AG04450 (cell line): ENCODE measurements at regions of chr9 and their contacts with region 1.

Region 1: GRCh38 chr9:110950041-110950645 is 88.1 kb downstream of the LPAR1 start:
- DNase-seq: no peak
- H3K4me3 ChIP-seq: no peak overlapping the region
- H3K27ac ChIP-seq: peak overlapping the region; percentile 71
- H3K27me3 ChIP-seq: no peaks in the 10 kb centered on the region
- CTCF ChIP-seq: no peak

Region 2: DNA sequence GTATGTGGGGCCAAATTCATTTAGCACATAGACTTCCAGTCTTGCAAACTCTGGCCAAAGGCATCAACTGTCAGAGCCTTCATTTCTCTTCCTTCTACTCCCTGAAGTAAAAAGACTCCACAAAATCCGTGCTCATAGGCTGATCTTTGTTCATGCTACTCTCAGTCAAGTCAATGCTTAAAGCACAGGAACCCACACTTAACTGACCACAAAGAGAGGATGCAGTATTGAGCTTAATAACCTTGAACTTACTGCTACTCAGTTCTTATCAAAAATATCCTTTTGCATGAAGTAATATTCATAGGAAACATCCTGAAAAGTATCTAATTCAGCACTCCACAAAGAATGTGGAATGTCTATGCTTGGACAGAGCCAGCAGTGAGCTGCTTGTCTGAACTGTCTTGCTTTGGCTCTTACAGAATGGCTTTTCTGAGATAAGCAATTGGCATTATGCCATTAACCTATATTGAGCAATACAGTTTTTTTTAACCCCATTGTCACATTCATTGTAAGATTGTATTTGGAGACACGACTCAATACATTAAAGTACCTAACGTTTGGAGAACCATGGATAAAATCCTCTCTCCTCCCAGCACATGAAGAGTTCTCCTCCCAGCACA is 66.4 kb after region 1 on chr9:
- CTCF ChIA-PET with region 1: no interaction called
- POLR2A ChIA-PET with region 1: interaction called, 11 read pairs
- DNase-seq: no peak
- H3K4me3 ChIP-seq: no peak overlapping the region
- H3K27ac ChIP-seq: no peak overlapping the region
- H3K27me3 ChIP-seq: no peaks in the 10 kb centered on the region
- CTCF ChIP-seq: no peak

Region 3: GRCh38 chr9:111198936-111199335 is 248.8 kb after region 1 on chr9:
- CTCF ChIA-PET with region 1: no interaction called
- POLR2A ChIA-PET with region 1: no interaction called
- DNase-seq: no peak
- H3K4me3 ChIP-seq: no peak overlapping the region
- H3K27ac ChIP-seq: no peak overlapping the region
- H3K27me3 ChIP-seq: no peaks in the 10 kb centered on the region
- CTCF ChIP-seq: no peak